ENCODE measurements at regions of chr17 and their contacts with region 1.

Region 1: DNA sequence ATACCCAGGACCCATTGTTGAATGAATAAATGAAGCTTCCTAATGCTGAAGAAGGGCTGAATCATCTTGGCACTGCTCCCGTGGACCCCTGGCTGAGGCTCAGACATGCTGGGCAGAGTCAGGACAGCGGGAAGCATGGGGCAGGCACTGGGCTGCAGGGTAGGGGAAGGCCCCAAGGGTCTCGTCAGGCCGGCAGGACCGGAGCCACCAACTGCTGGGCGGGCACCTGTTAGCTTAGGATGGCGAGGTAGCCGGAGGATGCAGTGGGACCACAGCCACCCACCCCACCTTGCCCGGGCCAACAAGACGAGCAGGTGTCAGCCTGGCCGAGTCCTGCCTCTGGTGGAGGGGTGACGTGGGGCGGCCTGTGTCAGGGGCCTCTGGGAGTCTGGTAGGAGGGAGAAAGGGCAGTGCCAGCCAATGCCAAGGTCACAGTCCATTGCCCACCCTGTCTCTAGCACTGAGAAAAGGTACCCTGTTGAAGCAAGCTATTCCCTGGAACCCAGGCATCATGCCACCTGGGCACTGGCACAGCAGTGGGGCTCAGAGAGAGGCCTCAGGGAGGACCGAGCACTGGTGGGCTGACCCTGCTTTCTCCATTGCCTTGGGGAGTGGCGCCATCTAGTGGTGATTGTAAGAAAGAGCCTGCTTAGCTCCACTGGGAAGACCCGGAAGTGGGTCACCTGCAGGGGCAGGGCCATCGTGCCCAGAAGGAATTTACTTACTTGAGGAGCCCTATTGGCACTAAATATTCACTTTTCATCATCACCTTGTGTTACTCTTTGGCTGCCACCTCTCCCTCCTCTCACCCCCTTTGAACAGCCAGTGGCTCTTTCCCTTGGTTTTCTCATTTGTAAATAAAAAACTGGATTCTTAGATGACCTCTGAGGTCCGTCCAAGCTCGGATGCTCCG is 3.0 kb upstream of the DLX3 start:
- DNase-seq: peak; percentile 73 to 84 (median 80)
- ATAC-seq: peak; percentile 75 to 78
- H3K4me3 ChIP-seq: no peak overlapping the region
- H3K27ac ChIP-seq: no peak overlapping the region
- H3K4me1 ChIP-seq: no peaks in the 10 kb centered on the region
- H3K27me3 ChIP-seq: no peaks in the 10 kb centered on the region

Region 2: DNA sequence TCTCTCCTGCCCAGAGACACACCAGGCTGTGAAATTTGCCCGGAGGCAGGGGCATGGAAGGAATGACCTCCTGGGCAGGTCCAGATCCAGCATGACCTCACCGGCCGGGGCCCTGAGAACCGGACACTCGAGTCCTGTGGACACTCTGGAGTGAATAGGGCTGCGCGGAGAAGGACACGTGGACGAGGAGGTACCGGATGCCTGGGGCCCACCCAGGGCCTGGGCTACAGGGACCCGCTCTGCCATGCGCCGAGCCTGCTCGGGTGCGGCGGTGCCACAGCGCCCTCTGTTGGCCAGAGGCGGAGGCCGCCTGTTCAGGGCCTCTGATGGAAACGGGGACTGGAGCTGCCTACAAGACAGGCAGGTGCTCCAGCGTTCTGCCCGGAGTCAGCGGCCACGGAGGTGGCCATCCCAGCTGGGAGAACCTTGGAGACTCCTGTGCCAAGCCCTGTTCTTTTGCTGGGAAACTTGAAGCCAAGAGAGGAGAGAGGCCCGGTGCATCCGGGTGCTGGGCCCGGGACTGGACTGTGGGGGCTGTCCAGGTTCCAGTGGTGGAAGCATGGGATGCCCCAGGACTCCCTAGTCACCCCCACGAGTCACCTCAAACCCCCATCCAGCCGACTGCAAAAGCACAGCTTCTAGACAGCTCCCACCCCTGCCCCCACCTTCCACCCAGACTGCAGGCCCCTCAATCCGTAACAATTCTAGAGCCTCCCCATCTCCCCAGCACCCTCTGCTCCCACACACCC is 441.6 kb before region 1 on chr17:
- intact Hi-C with region 1: loop called in 3 of 4 experiments (anchors 5 to 10 kb)
- DNase-seq: peak; percentile 81 to 93 (median 92)
- ATAC-seq: peak; percentile 89 to 90
- H3K4me3 ChIP-seq: no peak overlapping the region
- H3K27ac ChIP-seq: no peak overlapping the region
- H3K4me1 ChIP-seq: no peaks in the 10 kb centered on the region
- H3K27me3 ChIP-seq: no peaks in the 10 kb centered on the region

Region 3: DNA sequence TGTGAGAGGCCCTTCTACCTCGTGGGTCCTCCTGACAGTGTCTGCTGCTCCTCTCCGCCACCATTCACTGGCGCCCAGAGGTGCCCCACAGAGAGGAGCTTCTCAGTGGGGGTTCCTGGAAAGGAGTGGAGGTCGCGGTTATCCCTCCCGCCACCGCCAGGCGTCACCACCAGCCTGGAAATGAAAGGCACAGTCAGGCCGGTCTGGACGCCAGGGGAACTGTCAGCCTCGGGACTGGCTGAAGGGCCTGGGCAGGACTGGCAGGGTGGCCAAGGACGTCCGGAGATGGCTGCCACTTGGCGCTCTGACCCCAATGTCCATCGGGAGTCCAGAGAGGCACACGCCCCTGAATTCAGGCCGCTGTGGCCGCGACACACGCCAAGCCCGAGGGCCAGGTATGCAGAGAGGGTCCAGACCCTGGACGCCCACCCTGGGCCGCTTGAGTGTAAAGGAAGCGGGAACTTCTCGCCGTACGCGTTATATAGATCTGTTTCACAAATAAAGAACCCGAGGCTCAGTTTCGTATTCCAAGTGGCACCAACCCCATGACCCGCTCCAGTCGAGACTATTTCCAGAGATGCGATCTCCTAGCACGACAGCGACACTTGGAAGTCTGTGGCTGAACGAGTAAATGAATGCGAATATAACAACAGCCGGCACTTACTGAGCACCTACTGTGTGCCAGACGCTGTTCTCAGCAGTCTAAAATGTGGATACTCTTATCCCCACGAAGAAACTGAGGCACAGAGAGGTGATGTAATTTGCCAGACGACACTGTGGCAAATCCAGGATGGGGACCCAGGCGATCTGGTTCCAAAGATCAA is 430.0 kb before region 1 on chr17:
- intact Hi-C with region 1: loop called in 3 of 4 experiments (anchors 5 to 10 kb)
- DNase-seq: peak; percentile 91 to 96 (median 96)
- ATAC-seq: peak; percentile 76 to 82
- H3K4me3 ChIP-seq: peak overlapping the region; percentile 15
- H3K27ac ChIP-seq: peak overlapping the region; percentile 31
- H3K4me1 ChIP-seq: peaks cover 8% of the 10 kb centered on the region
- H3K27me3 ChIP-seq: no peaks in the 10 kb centered on the region

Region 4: DNA sequence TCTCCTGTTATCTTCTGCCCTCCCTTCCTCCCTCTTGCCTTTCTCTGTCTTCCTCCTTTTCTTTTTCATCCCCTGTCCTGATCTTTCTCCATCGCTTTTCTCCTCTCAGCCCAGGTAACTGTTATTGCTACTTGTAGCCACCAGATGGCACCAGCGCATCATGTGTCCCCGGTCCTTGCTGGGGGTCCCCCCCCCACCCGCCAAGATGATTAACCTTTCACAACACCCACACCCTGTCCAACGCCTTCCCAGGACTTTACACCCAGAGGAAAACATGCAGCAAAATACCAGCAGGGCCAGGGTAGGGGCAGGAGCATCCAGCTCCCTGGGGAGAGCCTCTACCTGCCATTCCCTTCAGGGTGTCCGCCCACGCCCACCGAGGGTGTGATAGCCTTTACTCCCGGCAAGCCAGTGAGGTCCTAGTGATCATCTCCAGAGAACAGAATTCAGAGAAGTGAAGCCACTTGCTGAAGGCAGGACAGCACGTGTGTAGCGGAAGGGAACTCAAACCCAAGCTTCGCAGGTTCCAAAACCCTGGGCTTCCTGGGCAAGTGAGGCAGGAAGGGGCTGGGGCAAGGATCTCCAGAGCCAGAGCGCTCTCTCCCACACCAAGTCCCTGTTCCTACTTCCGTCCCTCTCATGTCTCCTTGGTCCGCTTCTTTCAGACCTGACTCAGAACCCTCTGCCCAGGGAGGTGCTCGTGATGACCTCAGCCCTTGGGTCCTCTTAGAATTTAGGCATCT is 136.7 kb before region 1 on chr17:
- intact Hi-C with region 1: loop called (anchors 2 to 5 kb)
- DNase-seq: peak; percentile 44 to 70 (median 68)
- ATAC-seq: peak in 1 of 2 donors; percentile 39
- H3K4me3 ChIP-seq: no peak overlapping the region
- H3K27ac ChIP-seq: no peak overlapping the region
- H3K4me1 ChIP-seq: no peaks in the 10 kb centered on the region
- H3K27me3 ChIP-seq: no peaks in the 10 kb centered on the region

Region 5: DNA sequence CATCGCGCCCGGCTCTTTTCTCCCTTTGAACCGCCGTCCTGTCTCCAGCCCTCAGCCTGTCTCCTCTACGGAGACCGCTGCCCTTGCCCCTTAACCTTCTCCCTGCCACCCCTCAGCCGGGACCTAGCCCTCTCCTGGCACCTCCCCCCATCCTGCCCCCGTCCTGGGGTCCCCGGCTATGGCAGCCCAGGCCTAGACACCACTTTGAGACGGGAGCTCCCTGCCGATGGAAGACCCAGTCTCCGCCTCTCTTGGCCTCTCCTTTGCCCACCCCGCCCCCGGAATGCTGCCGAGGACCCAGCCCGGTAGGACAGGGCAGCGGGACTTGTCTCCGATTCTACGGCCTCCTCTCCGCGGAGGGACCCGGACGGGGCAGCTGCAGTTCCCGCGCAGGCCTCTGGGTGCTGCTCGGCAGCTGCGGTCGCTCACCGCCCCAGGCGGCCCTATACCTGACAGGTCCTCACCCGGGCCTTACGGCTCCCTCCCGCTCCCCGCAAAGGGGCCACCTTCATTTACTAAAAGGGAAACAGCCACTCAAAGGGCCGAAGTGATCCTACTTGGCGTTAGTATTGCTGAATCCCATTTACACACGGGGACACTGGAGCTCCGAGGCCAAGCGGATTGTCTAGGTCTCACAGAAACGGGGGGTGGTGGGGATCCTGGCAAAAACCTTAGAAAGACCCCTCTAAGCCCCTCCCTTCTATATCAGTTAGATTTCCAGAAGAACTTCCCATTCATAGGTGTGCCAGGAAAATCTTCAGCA is 117.6 kb before region 1 on chr17:
- intact Hi-C with region 1: loop called in 3 of 4 experiments (anchors 5 kb)
- DNase-seq: peak; percentile 75 to 90 (median 87)
- ATAC-seq: peak; percentile 91 to 92
- H3K4me3 ChIP-seq: no peak overlapping the region
- H3K27ac ChIP-seq: no peak overlapping the region
- H3K4me1 ChIP-seq: no peaks in the 10 kb centered on the region
- H3K27me3 ChIP-seq: no peaks in the 10 kb centered on the region

Region 6: GRCh38 chr17:49952209-49952911 is 45.7 kb before region 1 on chr17:
- intact Hi-C with region 1: loop called in 1 of 4 experiments (anchors 5 kb)
- DNase-seq: peak; percentile 73 to 92 (median 90)
- ATAC-seq: peak; percentile 63 to 79
- H3K4me3 ChIP-seq: no peak overlapping the region
- H3K27ac ChIP-seq: no peak overlapping the region
- H3K4me1 ChIP-seq: no peaks in the 10 kb centered on the region
- H3K27me3 ChIP-seq: no peaks in the 10 kb centered on the region

Region 7: GRCh38 chr17:50064258-50065001 is 66.4 kb after region 1 on chr17:
- intact Hi-C with region 1: no loop called
- DNase-seq: peak; percentile 60 to 76 (median 66)
- ATAC-seq: peak; percentile 6 to 44
- H3K4me3 ChIP-seq: no peak overlapping the region
- H3K27ac ChIP-seq: peak overlapping the region; percentile 62
- H3K4me1 ChIP-seq: peaks cover 25% of the 10 kb centered on the region
- H3K27me3 ChIP-seq: no peaks in the 10 kb centered on the region